Mammary epithelial cell (primary cell): ENCODE measurements at regions of chr1 and their contacts with region 1.

Region 1: GRCh38 chr1:28480308-28480707 is 25.5 kb upstream of the RCC1 start:
- DNase-seq: no peak
- H3K4me3 ChIP-seq: no peak overlapping the region
- H3K27ac ChIP-seq: no peak overlapping the region
- H3K4me1 ChIP-seq: no peaks in the 10 kb centered on the region
- H3K27me3 ChIP-seq: no peaks in the 10 kb centered on the region
- CTCF ChIP-seq: no peak

Region 2: GRCh38 chr1:28127617-28128257 is 352.6 kb before region 1 on chr1:
- CTCF ChIA-PET with region 1: no interaction called
- dilution Hi-C with region 1: loop called (anchors 10 kb)
- in situ Hi-C with region 1: no loop called
- intact Hi-C with region 1: no loop called
- DNase-seq: no peak
- H3K4me3 ChIP-seq: no peak overlapping the region
- H3K27ac ChIP-seq: no peak overlapping the region
- H3K4me1 ChIP-seq: peaks cover 20% of the 10 kb centered on the region
- H3K27me3 ChIP-seq: no peaks in the 10 kb centered on the region
- CTCF ChIP-seq: no peak

Region 3: DNA sequence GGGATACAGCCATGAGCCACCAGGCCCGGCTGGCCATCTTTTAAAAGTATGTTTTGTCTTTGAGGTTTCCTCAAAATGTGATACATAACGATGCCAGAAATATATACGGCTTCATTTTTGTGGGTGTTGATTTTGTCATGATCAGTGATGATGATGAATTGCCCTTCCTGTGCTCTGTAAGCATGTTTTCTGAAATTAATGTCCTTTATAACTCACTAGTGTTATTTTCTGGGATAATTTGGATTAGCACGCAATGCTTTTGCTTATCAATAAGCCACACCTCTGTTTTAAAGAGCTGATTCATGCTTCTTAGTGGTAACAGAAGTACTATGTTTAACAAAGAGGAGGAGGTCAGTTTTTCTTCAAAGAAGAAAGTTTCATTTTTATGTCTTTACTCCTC is 85.1 kb before region 1 on chr1:
- CTCF ChIA-PET with region 1: no interaction called
- dilution Hi-C with region 1: loop called (anchors 5 kb)
- in situ Hi-C with region 1: no loop called
- intact Hi-C with region 1: no loop called
- DNase-seq: peak; percentile 14
- H3K4me3 ChIP-seq: no peak overlapping the region
- H3K27ac ChIP-seq: no peak overlapping the region
- H3K4me1 ChIP-seq: peaks cover 6% of the 10 kb centered on the region
- H3K27me3 ChIP-seq: no peaks in the 10 kb centered on the region
- CTCF ChIP-seq: no peak